Ovary (tissue), 10 donors: ENCODE measurements at regions of chr2 and their contacts with region 1.

Region 1: GRCh38 chr2:100416935-100417710 is at the start of gene CHST10:
- DNase-seq: peak; percentile 54 to 81 (median 61)
- H3K4me3 ChIP-seq: peak within 1 kb of the TSS; percentile 75
- H3K27ac ChIP-seq: peak within 1 kb of the TSS; percentile 67 to 79
- H3K4me1 ChIP-seq: no peaks in the 10 kb centered on the region
- H3K27me3 ChIP-seq: no peaks in the 10 kb centered on the region
- CTCF ChIP-seq: no peak
- EP300 ChIP-seq: no peak
- POLR2A ChIP-seq: peak; percentile 36
- total RNA-seq, gene CHST10: 11.9 to 23.6 (median 15.8) TPM

Region 2: GRCh38 chr2:100562732-100563720 is 145.9 kb after region 1 on chr2 and contains the start of gene PDCL3:
- intact Hi-C with region 1: loop called in 1 of 4 experiments (anchors 5 kb)
- DNase-seq: peak; percentile 94 to 96 (median 94)
- H3K4me3 ChIP-seq: peak within 1 kb of the TSS; percentile 87
- H3K27ac ChIP-seq: peak within 1 kb of the TSS; percentile 67 to 83
- H3K4me1 ChIP-seq: peaks cover 6% of the 10 kb centered on the region
- H3K27me3 ChIP-seq: no peaks in the 10 kb centered on the region
- CTCF ChIP-seq: peak in 1 of 3 donors; percentile 12
- EP300 ChIP-seq: peak; percentile 15
- POLR2A ChIP-seq: no peak
- total RNA-seq, gene PDCL3: 9.8 to 24.6 (median 19.1) TPM